ENCODE measurements at regions of chr10 and their contacts with region 1.

Region 1: GRCh38 chr10:48981310-48981907 is 41.8 kb upstream of the LRRC18 start:
- DNase-seq: peak; percentile 50
- ATAC-seq: peak; percentile 49
- H3K4me3 Mint-ChIP-seq: no peak overlapping the region
- H3K27ac Mint-ChIP-seq: no peak overlapping the region
- H3K4me1 Mint-ChIP-seq: no peaks in the 10 kb centered on the region
- H3K27me3 Mint-ChIP-seq: no peaks in the 10 kb centered on the region
- CTCF ChIP-seq: peak; percentile 85

Region 2: GRCh38 chr10:49164559-49165188 is 183.3 kb after region 1 on chr10:
- CTCF ChIA-PET with region 1: interaction called, 3 read pairs
- POLR2A ChIA-PET with region 1: no interaction called
- intact Hi-C with region 1: loop called (anchors 5 kb)
- DNase-seq: peak; percentile 66
- ATAC-seq: peak; percentile 96
- H3K4me3 Mint-ChIP-seq: no peak overlapping the region
- H3K27ac Mint-ChIP-seq: no peak overlapping the region
- H3K4me1 Mint-ChIP-seq: peaks cover 12% of the 10 kb centered on the region
- H3K27me3 Mint-ChIP-seq: no peaks in the 10 kb centered on the region
- CTCF ChIP-seq: peak; percentile 64

Region 3: DNA sequence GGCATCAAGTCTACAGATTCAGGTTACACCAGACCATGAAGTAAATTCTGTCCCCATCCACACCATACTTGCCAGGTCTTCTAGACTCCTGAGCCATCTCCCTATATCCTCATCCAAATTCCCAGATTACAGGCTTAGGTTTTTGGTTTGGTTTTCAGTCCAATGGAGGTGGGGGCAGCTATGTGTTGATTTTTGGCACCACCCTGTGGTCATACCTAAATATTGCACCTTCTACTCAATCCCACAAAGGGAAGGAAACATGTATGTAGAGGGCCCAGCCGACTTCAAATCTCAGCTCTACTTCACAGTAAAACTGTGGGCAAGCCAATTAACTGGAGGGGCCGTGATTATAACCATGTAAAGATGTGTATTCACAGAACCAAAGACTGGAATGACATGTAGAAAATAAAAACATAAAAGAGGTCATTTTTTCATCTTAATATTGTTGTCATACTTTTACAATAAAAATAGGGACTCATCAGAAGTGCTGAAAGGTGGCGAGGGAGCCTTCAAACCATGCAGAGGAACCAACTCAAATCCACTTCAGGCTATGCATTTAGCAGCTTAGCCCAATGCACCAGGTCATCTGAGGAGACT is 537.7 kb after region 1 on chr10:
- CTCF ChIA-PET with region 1: no interaction called
- POLR2A ChIA-PET with region 1: no interaction called
- intact Hi-C with region 1: loop called (anchors 10 kb)
- DNase-seq: peak; percentile 42
- ATAC-seq: peak; percentile 72
- H3K4me3 Mint-ChIP-seq: no peak overlapping the region
- H3K27ac Mint-ChIP-seq: no peak overlapping the region
- H3K4me1 Mint-ChIP-seq: no peaks in the 10 kb centered on the region
- H3K27me3 Mint-ChIP-seq: no peaks in the 10 kb centered on the region
- CTCF ChIP-seq: peak; percentile 76

Measured in activated CD8-positive, alpha-beta T cell treated with anti-CD3 and anti-CD28 coated beads for 36 hours (primary cell).